ENCODE measurements at regions of chr3 and their contacts with region 1.

Region 1: GRCh38 chr3:148930752-148931151 is 60.6 kb upstream of the GYG1 start:
- DNase-seq: no peak
- ATAC-seq: no peak
- H3K4me3 ChIP-seq: no peak overlapping the region
- H3K27ac ChIP-seq: no peak overlapping the region
- H3K4me1 ChIP-seq: peaks cover 6% of the 10 kb centered on the region
- H3K27me3 ChIP-seq: no peaks in the 10 kb centered on the region
- CTCF ChIP-seq: no peak

Region 2: GRCh38 chr3:148433665-148434064 is 497.1 kb before region 1 on chr3:
- intact Hi-C with region 1: no loop called
- DNase-seq: no peak
- ATAC-seq: no peak
- H3K4me3 ChIP-seq: no peak overlapping the region
- H3K27ac ChIP-seq: no peak overlapping the region
- H3K4me1 ChIP-seq: no peaks in the 10 kb centered on the region
- H3K27me3 ChIP-seq: no peaks in the 10 kb centered on the region
- CTCF ChIP-seq: no peak

Region 3: DNA sequence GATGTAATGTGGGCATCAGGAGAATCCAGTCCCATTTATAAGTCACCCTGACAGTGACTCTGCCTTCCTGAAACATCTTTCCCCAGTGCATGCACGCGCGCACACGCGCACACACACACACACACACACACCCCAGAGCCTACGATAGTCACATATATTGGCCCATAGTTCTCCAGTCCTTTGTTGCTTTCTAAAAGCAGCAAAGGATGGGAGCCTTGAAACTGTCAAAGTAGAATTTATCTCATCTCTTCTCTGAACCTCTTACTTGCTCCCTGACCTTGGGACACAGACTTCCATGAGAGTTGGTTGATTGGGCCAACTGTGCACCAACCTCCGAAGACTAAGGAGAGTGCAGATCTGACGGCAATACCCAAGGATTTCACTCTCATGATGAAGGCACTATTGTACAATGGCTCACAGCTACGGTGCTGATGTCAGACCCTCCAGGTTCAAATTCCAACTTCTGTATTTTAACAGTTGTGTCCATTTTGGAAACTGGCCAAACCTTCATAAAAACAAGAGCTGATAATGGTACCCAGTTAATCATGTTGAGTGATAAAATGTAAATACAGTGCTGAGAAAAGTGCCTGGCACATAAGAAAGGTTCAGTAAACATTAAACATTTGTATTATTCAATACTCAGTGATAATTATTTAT is 57.4 kb before region 1 on chr3:
- intact Hi-C with region 1: loop called in 1 of 2 experiments (anchors 5 kb)
- DNase-seq: no peak
- ATAC-seq: no peak
- H3K4me3 ChIP-seq: no peak overlapping the region
- H3K27ac ChIP-seq: no peak overlapping the region
- H3K4me1 ChIP-seq: no peaks in the 10 kb centered on the region
- H3K27me3 ChIP-seq: no peaks in the 10 kb centered on the region
- CTCF ChIP-seq: no peak

Region 4: GRCh38 chr3:148955544-148956346 is 25.0 kb after region 1 on chr3:
- intact Hi-C with region 1: no loop called
- DNase-seq: peak; percentile 19 to 56
- ATAC-seq: peak; percentile 71 to 90 (median 81)
- H3K4me3 ChIP-seq: peak overlapping the region; percentile 36
- H3K27ac ChIP-seq: peak overlapping the region; percentile 86
- H3K4me1 ChIP-seq: peaks cover 7% of the 10 kb centered on the region
- H3K27me3 ChIP-seq: no peaks in the 10 kb centered on the region
- CTCF ChIP-seq: peak; percentile 61